ENCODE measurements at regions of chr1 and their contacts with region 1.

Region 1: DNA sequence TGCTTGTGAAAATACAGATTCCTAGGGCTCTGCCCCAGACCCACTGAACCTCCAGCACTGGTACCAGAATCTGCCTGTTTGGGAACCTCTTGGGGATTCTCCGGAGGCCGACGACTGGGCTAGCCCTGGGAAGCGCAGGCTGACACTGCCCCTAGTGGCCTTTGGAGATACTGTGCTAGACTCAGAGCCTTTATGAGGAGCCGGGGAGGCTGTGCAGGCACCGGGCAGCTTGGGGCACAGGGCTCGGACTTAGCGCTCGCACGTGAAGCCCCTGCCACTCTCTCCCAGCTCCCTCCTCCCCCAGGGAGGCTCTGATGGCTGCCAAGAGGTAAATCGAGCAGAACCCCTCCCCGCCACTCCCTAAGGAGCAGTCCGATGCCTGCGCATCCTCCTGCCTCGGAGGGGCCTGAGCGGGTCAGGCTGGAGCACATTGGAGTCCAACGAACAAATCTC is 144.6 kb upstream of the TNR start:
- DNase-seq: no peak
- H3K4me3 ChIP-seq: no peak overlapping the region
- H3K27ac ChIP-seq: no peak overlapping the region
- H3K27me3 ChIP-seq: no peaks in the 10 kb centered on the region
- CTCF ChIP-seq: peak; percentile 87

Region 2: DNA sequence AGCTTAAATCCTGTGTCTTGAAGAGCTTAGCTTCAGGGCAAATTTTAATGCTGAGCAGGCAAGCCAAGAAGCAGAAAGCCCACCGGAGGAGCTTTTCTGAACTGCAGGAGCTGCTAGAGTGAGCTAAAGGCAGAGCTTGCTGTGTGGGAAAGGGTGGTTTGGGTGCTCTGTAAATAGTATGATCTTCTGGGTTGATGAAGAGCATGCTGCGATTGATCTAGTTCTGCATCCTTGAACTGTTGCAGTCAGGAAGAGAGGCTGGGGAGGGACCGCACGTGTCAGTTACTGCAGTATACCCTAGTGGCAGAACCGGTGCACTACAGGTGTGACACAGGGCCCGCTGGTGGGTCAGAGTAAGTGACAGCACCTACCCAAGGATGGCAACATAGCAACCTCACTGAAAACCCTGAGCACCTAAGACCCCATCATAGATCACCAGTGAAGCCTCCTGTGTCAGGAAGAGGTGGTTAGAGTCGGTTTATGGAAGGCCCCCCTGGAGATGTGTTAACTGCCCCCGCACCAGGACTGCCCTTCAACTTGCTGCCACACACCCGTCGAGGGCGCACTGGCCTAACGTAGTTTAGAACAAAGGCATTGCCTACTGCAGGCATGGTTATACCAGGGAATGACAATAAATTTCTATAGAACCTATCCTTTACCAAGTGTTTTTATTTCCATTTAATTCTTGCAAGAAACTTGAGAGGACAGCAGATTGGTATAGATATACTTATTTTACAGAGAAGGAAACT is 549.4 kb before region 1 on chr1:
- CTCF ChIA-PET with region 1: no interaction called
- POLR2A ChIA-PET with region 1: no interaction called
- DNase-seq: no peak
- H3K4me3 ChIP-seq: no peak overlapping the region
- H3K27ac ChIP-seq: no peak overlapping the region
- H3K27me3 ChIP-seq: no peaks in the 10 kb centered on the region
- CTCF ChIP-seq: peak; percentile 28; the same call in 1 of the 2 replicates

Region 3: DNA sequence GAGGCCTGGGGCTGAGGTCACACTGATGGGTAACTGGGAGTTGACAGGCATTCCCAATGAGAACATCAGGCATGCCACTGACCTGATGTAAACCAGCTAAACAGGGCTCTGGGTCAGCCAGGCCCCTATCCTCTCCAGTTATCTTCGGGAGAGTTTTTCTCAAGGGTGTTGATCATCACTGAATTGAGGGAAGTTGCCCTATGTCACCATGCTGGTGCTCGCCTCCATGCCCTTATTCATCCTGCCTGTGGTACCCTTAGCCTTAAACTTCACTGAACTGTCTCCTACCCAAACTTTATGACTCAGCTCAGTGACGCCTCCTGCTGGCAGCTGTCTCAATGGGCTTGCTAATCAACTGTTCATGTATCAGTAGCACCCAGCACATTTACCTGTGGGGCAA is 63.9 kb before region 1 on chr1:
- CTCF ChIA-PET with region 1: no interaction called
- POLR2A ChIA-PET with region 1: no interaction called
- DNase-seq: no peak
- H3K4me3 ChIP-seq: no peak overlapping the region
- H3K27ac ChIP-seq: no peak overlapping the region
- H3K27me3 ChIP-seq: no peaks in the 10 kb centered on the region
- CTCF ChIP-seq: no peak

Region 4: GRCh38 chr1:175865041-175865766 is 22.8 kb before region 1 on chr1:
- CTCF ChIA-PET with region 1: interaction called, 10 read pairs
- POLR2A ChIA-PET with region 1: no interaction called
- DNase-seq: no peak
- H3K4me3 ChIP-seq: no peak overlapping the region
- H3K27ac ChIP-seq: no peak overlapping the region
- H3K27me3 ChIP-seq: peaks cover 2% of the 10 kb centered on the region
- CTCF ChIP-seq: no peak